T-cell (primary cell): ENCODE measurements at regions of chr20 and their contacts with region 1.

Region 1: GRCh38 chr20:59441860-59442845 is 141.7 kb downstream of the EDN3 start:
- DNase-seq: no peak
- ATAC-seq: no peak
- H3K4me3 ChIP-seq: no peak overlapping the region
- H3K4me3 Mint-ChIP-seq: no peak overlapping the region
- H3K27ac ChIP-seq: no peak overlapping the region
- H3K27ac Mint-ChIP-seq: no peak overlapping the region
- H3K4me1 ChIP-seq: no peaks in the 10 kb centered on the region
- H3K4me1 Mint-ChIP-seq: peaks cover 0 to 3% (median 0%) of the 10 kb centered on the region in 3 donors
- H3K27me3 ChIP-seq: peaks cover 3 to 32% of the 10 kb centered on the region in 2 experiments
- H3K27me3 Mint-ChIP-seq: peaks cover 45 to 46% of the 10 kb centered on the region in 2 donors

Region 2: DNA sequence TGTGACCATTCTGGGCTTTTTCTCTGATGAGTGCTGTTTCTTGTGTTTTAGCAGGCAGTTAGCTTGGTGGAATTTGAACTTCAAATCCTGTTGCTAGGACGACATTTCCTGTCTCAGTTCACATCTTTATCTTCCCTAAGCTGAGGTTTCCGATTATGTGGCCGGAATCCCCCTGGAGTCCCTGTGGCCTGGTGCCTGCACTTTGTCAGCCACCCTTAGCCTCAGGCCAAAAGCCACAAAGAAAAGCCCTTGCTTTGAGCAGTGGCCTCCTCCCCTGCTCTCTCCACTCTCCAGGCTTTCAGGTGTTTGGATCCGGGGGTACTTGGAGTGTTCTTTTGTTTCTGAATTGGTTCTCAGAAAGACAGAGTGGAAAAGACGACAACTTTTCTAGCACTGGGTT is 1672.4 kb before region 1 on chr20:
- CTCF ChIA-PET with region 1: no interaction called
- POLR2A ChIA-PET with region 1: no interaction called
- DNase-seq: no peak
- ATAC-seq: no peak
- H3K4me3 ChIP-seq: no peak overlapping the region
- H3K4me3 Mint-ChIP-seq: no peak overlapping the region
- H3K27ac ChIP-seq: no peak overlapping the region
- H3K27ac Mint-ChIP-seq: no peak overlapping the region
- H3K4me1 ChIP-seq: no peaks in the 10 kb centered on the region
- H3K4me1 Mint-ChIP-seq: peaks cover 0 to 7% (median 3%) of the 10 kb centered on the region in 3 donors
- H3K27me3 ChIP-seq: peaks cover 0 to 14% of the 10 kb centered on the region in 2 experiments
- H3K27me3 Mint-ChIP-seq: peaks cover 7 to 11% of the 10 kb centered on the region in 2 donors

Region 3: DNA sequence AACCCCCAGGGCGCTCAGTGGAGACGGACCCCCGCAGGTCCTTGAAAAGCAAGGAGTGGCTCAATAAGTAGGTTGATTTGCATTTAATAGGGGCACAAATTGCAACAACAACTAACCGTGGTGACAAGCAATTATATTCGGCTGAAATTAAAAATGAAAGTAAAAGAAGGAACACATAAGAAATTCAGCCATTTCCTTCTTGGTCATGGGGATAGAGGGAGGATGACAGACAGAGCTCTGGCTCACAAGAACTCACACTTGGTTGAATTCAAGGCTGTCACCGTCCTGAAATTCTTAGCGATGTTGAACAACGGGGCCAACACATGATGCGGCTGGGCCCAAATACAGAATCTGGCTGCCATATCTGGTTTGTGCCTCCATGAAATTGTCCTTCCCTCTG is 12.8 kb before region 1 on chr20:
- CTCF ChIA-PET with region 1: interaction called, 3 to 11 read pairs
- POLR2A ChIA-PET with region 1: no interaction called
- DNase-seq: no peak
- ATAC-seq: no peak
- H3K4me3 ChIP-seq: no peak overlapping the region
- H3K4me3 Mint-ChIP-seq: peak overlapping the region; percentile 19 to 32 (median 21)
- H3K27ac ChIP-seq: no peak overlapping the region
- H3K27ac Mint-ChIP-seq: no peak overlapping the region
- H3K4me1 ChIP-seq: peaks cover 0 to 6% of the 10 kb centered on the region in 2 experiments
- H3K4me1 Mint-ChIP-seq: peaks cover 12 to 14% (median 13%) of the 10 kb centered on the region in 3 donors
- H3K27me3 ChIP-seq: peaks cover 0 to 12% of the 10 kb centered on the region in 2 experiments
- H3K27me3 Mint-ChIP-seq: peaks cover 10 to 13% of the 10 kb centered on the region in 2 donors